ENCODE measurements at regions of chr5 and their contacts with region 1.

Region 1: DNA sequence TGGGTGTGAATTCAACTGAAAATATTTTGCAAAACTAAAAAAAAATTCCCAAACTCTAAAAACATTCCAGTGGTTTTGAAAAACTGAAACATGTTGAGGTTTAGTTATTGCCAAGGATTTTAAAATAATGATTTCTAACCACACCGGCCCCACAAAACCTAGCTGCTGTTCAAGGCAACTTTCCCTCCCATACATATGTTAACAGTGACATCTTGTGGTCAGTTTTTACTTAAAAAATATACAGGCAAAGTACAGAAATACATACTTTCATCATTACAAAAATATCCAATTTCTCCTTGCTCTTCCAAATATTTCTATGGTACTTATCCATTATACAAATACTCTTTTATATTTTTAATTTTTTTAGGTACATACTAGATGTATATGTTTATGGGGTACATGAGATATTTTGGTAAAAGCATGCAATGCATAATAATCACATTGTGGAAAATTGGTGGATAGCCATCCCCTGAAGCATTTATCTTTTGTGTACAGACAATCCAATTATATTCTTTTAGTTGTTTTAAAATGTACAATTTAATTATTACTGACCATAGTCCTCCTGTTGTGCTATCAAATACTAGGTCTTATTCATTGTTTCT is 34.4 kb upstream of the MRPS30 start:
- DNase-seq: no peak
- H3K4me3 Mint-ChIP-seq: no peak overlapping the region
- H3K27ac Mint-ChIP-seq: no peak overlapping the region
- H3K4me1 Mint-ChIP-seq: no peaks in the 10 kb centered on the region
- H3K27me3 Mint-ChIP-seq: peaks cover 4% of the 10 kb centered on the region

Region 2: GRCh38 chr5:43729846-43730478 is 1044.4 kb before region 1 on chr5:
- intact Hi-C with region 1: loop called (anchors 5 kb)
- DNase-seq: no peak
- H3K4me3 Mint-ChIP-seq: no peak overlapping the region
- H3K27ac Mint-ChIP-seq: no peak overlapping the region
- H3K4me1 Mint-ChIP-seq: no peaks in the 10 kb centered on the region
- H3K27me3 Mint-ChIP-seq: peaks cover 11% of the 10 kb centered on the region

Region 3: GRCh38 chr5:44536650-44537260 is 237.6 kb before region 1 on chr5:
- intact Hi-C with region 1: loop called (anchors 2 kb)
- DNase-seq: peak; percentile 58
- H3K4me3 Mint-ChIP-seq: no peak overlapping the region
- H3K27ac Mint-ChIP-seq: no peak overlapping the region
- H3K4me1 Mint-ChIP-seq: no peaks in the 10 kb centered on the region
- H3K27me3 Mint-ChIP-seq: no peaks in the 10 kb centered on the region